ENCODE measurements at regions of chr6 and their contacts with region 1.

Region 1: GRCh38 chr6:18595774-18596530 is 208.8 kb downstream of the RNF144B start:
- DNase-seq: peak; percentile 55
- H3K4me3 ChIP-seq: no peak overlapping the region
- H3K27ac ChIP-seq: no peak overlapping the region
- H3K4me1 ChIP-seq: no peaks in the 10 kb centered on the region
- H3K27me3 ChIP-seq: no peaks in the 10 kb centered on the region
- CTCF ChIP-seq: peak; percentile 77 to 85 (median 80)
- POLR2A ChIP-seq: no peak

Region 2: GRCh38 chr6:20056350-20056992 is 1460.5 kb after region 1 on chr6:
- intact Hi-C with region 1: loop called (anchors 2 kb)
- DNase-seq: no peak
- H3K4me3 ChIP-seq: no peak overlapping the region
- H3K27ac ChIP-seq: no peak overlapping the region
- H3K4me1 ChIP-seq: no peaks in the 10 kb centered on the region
- H3K27me3 ChIP-seq: no peaks in the 10 kb centered on the region
- CTCF ChIP-seq: peak; percentile 9 to 69 (median 56)
- POLR2A ChIP-seq: no peak

Measured in prostate gland (tissue), 2 donors.